Panc1 (cell line): ENCODE measurements at regions of chr1 and their contacts with region 1.

Region 1: GRCh38 chr1:26723013-26723991 is 27.5 kb downstream of the ARID1A start:
- DNase-seq: no peak
- ATAC-seq: peak; percentile 83
- H3K4me3 ChIP-seq: peak overlapping the region in 1 of 2 experiments; percentile 6; a peak in 2 of 4 replicates
- H3K27ac ChIP-seq: peak overlapping the region; percentile 5
- H3K4me1 ChIP-seq: peaks cover 69% of the 10 kb centered on the region
- H3K27me3 ChIP-seq: no peaks in the 10 kb centered on the region
- CTCF ChIP-seq: no peak

Region 2: DNA sequence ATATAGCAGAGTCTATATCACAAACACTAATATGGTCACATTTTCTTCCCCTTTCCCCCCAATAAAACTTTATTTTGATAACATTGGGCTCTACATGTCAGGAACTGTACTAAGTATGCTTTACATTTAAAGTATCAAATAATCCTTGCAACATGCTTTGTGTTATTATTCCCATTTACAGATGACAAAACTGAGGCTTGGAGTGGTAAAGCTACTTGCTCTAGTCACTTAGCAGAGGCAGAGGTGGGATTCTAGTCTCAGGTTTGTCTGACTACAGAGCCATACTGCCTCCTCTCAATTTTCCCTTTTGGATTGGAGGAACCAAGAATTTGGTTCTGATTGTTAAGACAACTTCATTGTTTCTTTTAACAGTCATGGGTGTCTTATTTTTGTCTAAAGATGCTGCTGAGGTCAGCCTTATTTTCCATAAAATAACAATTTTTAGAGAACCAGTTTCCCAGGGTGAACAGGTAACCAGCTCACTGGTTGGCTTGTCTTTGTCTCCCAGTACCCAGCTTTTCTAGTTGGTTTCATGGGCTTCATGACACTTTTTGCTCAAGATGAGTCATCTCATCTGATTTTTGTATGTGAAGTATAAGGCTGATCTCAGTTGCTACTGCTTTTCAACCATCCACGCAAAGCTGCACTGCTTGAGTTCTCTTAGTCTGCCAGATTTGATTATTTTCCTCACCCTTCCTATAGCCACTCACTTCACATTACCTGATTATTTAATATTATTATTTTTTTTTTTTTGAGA is 108.5 kb before region 1 on chr1:
- CTCF ChIA-PET with region 1: no interaction called
- POLR2A ChIA-PET with region 1: interaction called, 18 read pairs
- in situ Hi-C with region 1: no loop called
- intact Hi-C with region 1: no loop called
- DNase-seq: no peak
- ATAC-seq: no peak
- H3K4me3 ChIP-seq: no peak overlapping the region
- H3K27ac ChIP-seq: no peak overlapping the region
- H3K4me1 ChIP-seq: peaks cover 13% of the 10 kb centered on the region
- H3K27me3 ChIP-seq: no peaks in the 10 kb centered on the region
- CTCF ChIP-seq: no peak